ENCODE measurements at regions of chr11 and their contacts with region 1.

Region 1: DNA sequence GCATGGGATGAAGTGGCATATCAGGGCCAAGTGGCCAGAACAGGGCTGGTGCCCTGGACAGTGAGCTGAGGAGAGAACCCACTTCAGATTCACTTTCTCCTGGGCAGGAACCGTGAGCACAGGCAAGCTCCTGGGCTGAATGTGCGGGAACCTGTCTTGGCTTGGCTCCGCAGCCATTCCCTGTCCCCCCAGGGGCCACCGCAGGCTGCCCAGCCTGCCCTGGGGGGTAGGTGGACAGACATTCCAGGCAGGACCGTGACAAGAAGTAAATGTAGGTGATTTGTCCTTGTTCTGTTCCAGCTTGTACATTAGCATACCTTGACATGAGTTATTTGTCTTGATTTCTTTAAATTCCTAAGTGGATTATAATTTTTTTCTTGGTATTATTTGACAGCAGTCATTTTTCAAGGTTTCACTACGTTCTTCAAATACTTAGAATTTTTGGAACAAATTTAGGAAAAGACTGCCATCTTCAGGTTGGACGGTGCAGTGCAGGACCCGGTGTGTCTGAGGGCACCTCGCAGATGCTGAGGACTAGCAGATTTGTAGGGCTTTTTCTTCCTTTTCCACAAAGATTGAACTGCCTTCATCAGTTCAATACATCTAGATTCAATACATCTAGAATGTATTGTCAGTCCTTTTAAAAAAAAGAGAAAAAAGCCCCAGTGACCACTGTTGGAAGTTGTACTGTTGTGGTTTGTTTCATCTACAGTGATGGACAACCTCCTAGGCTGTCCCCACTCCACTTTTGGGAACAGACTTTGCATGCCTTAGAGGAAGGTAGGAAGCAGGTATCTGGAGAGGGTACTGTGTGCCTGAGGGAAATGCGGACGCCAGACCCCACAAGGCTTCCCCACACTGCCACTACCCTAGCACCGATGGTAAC is 115.1 kb upstream of the RASSF10 start:
- DNase-seq: peak; percentile 78
- H3K4me3 ChIP-seq: no peak overlapping the region
- H3K27ac ChIP-seq: no peak overlapping the region
- H3K4me1 ChIP-seq: no peaks in the 10 kb centered on the region
- H3K27me3 ChIP-seq: no peaks in the 10 kb centered on the region
- CTCF ChIP-seq: peak; percentile 95

Region 2: DNA sequence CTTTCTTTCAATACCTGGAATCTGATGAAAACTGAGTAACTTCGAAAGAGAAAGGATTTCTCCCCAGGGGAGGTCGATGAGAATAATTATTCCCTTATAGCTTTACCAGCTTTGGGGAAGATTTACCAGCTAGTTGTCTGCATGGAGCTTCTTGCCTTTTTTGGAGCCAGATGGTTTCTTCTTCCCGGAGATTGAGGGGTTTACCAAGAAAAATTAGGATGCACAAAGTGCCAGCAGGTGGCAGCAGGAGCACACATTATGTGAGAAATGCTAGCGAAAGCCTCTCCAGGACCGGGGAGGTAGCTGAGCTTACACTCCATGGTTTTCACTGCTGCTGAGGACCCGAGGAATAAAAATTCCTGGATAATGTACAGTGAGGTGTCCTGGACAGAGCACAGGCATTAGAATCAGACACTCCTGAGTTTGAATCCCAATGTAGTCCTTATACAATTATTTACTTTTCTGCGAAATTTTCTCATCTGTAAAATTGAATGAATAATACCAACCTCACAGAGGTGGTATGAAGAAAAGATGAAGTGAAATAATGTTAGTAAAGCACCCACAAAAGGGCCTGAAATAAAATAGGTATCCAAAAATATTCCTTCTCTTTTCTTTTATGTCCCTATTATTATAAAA is 562.7 kb before region 1 on chr11:
- intact Hi-C with region 1: loop called (anchors 5 kb)
- DNase-seq: peak; percentile 91
- H3K4me3 ChIP-seq: no peak overlapping the region
- H3K27ac ChIP-seq: no peak overlapping the region
- H3K4me1 ChIP-seq: no peaks in the 10 kb centered on the region
- H3K27me3 ChIP-seq: no peaks in the 10 kb centered on the region
- CTCF ChIP-seq: peak; percentile 62

Region 3: DNA sequence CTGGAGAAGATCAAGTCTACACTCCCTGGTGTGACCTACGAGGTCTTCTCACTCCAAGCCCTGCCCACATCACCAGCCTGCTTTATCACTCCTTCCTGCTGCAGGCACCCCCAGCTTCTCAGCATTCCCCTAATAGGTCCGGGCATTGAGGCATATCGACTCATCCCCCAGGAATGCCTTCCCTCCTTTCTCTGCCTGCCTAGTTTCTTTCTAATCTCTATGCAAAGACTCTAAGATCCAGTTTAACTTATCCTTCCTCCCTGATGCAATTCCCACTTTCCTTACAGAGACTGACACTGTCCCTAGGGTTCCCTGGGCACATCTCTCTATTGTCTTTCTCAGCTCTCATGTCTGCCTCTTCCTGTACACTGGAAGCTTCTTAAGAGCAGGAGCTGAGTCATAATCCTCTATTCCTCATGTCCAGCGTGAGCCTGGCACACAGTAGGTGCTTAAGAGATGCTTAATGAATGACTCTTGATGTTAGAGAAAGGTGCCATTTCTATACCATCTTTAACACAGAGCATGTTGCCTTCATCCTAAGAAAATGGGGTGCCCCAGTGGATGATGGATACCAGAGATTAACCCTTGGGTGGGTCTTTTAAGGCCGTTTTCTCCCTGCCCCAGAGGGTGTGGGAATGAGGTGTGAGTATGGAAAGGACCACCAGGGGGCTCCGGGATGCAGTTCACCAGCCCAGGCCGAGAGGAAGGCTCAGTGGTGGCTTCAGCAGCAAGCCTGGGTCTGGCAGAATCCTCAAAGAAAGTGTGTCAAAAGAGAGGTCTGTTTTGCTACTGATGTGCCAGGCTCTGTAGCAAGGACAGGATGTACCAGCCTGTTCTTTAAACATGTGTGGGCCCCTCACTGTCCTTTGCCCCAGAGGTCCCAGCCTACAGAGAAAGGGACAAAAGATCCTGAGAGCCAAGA is 482.0 kb before region 1 on chr11:
- intact Hi-C with region 1: loop called (anchors 10 kb)
- DNase-seq: peak; percentile 61
- H3K4me3 ChIP-seq: no peak overlapping the region
- H3K27ac ChIP-seq: peak overlapping the region; percentile 30
- H3K4me1 ChIP-seq: no peaks in the 10 kb centered on the region
- H3K27me3 ChIP-seq: no peaks in the 10 kb centered on the region
- CTCF ChIP-seq: peak; percentile 47

Region 4: GRCh38 chr11:12599408-12600143 is 294.5 kb before region 1 on chr11:
- intact Hi-C with region 1: loop called (anchors 5 kb)
- DNase-seq: peak; percentile 65
- H3K4me3 ChIP-seq: no peak overlapping the region
- H3K27ac ChIP-seq: no peak overlapping the region
- H3K4me1 ChIP-seq: peaks cover 5% of the 10 kb centered on the region
- H3K27me3 ChIP-seq: no peaks in the 10 kb centered on the region
- CTCF ChIP-seq: peak; percentile 75

Region 5: DNA sequence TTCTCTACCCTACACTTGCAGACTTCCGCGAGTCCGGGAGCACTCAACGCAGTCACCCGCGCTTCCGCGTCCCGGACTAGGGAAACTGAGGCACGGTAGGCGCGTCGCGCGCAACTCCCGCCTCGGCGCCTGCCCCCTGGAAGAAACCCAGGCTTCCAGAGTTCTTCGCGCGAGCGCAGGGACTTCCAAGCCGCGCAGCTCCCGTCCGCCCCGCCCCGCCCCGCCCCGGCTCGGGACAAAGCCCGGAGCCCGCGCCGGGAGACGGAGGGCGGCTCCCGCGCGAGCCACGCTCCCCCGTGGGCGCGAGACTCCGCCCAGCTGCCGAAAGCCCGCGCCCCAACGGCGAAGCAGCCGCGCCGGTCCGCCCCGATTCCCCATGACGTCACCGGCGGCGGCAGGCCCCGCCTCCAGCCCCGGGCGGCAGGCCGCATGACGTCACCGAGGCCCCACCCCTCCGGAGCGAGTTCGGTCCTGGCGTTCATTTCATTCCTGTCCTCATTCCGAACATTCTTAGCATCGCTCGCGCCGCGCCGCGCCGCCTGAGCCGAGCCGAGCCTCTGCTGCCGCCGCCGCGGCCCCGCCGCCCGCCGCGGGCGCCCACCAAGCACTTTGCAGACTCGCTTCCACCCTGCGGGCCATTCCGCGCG is 220.0 kb before region 1 on chr11 and contains the start of gene TEAD1:
- intact Hi-C with region 1: loop called (anchors 5 kb)
- DNase-seq: peak; percentile 98
- H3K4me3 ChIP-seq: peak within 1 kb of the TSS; percentile 62
- H3K27ac ChIP-seq: peak within 1 kb of the TSS; percentile 86
- H3K4me1 ChIP-seq: no peaks in the 10 kb centered on the region
- H3K27me3 ChIP-seq: no peaks in the 10 kb centered on the region
- CTCF ChIP-seq: no peak
- total RNA-seq, gene TEAD1: 32.7 to 56.7 TPM

Measured in colonic mucosa (tissue), 4 donors.